ENCODE measurements at regions of chr5 and their contacts with region 1.

Region 1: GRCh38 chr5:112995764-112996618 is 19.4 kb downstream of the DCP2 start:
- DNase-seq: peak; percentile 55
- H3K4me3 ChIP-seq: no peak overlapping the region
- H3K27ac ChIP-seq: no peak overlapping the region
- H3K4me1 ChIP-seq: peaks cover 12% of the 10 kb centered on the region
- H3K27me3 ChIP-seq: no peaks in the 10 kb centered on the region
- CTCF ChIP-seq: peak; percentile 94

Region 2: GRCh38 chr5:112717506-112718082 is 278.4 kb before region 1 on chr5:
- intact Hi-C with region 1: no loop called
- DNase-seq: no peak
- H3K4me3 ChIP-seq: no peak overlapping the region
- H3K27ac ChIP-seq: no peak overlapping the region
- H3K4me1 ChIP-seq: peaks cover 40% of the 10 kb centered on the region
- H3K27me3 ChIP-seq: no peaks in the 10 kb centered on the region
- CTCF ChIP-seq: no peak

Region 3: DNA sequence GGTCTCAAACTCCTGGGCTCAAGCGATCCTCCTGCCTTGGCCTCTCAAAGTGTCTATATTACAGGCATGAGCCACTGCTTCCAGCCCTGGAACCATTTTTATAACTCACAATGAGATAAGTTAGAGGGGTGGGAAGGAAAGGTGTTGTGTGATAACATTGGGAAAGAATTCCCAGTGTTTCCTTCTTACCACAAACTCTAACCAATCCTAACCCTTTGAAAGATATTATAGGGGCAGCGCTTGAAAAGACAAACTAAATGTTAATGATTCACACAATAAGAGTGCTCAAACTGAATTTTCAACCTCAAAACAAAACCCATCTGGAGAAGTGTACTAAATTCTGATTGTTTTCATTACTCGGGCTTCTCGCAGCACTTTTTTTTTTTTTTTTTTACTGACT is 329.1 kb after region 1 on chr5:
- intact Hi-C with region 1: loop called (anchors 5 kb)
- DNase-seq: no peak
- H3K4me3 ChIP-seq: no peak overlapping the region
- H3K27ac ChIP-seq: no peak overlapping the region
- H3K4me1 ChIP-seq: peaks cover 8% of the 10 kb centered on the region
- H3K27me3 ChIP-seq: no peaks in the 10 kb centered on the region
- CTCF ChIP-seq: no peak

Region 4: GRCh38 chr5:113513384-113514288 is 517.6 kb after region 1 on chr5 and contains the start of gene YTHDC2:
- intact Hi-C with region 1: loop called (anchors 10 kb)
- DNase-seq: peak; percentile 89
- H3K4me3 ChIP-seq: peak within 1 kb of the TSS; percentile 79
- H3K27ac ChIP-seq: peak within 1 kb of the TSS; percentile 92
- H3K4me1 ChIP-seq: peaks cover 41% of the 10 kb centered on the region
- H3K27me3 ChIP-seq: no peaks in the 10 kb centered on the region
- CTCF ChIP-seq: peak; percentile 42
- total RNA-seq, gene YTHDC2: 13.6 TPM

Region 5: DNA sequence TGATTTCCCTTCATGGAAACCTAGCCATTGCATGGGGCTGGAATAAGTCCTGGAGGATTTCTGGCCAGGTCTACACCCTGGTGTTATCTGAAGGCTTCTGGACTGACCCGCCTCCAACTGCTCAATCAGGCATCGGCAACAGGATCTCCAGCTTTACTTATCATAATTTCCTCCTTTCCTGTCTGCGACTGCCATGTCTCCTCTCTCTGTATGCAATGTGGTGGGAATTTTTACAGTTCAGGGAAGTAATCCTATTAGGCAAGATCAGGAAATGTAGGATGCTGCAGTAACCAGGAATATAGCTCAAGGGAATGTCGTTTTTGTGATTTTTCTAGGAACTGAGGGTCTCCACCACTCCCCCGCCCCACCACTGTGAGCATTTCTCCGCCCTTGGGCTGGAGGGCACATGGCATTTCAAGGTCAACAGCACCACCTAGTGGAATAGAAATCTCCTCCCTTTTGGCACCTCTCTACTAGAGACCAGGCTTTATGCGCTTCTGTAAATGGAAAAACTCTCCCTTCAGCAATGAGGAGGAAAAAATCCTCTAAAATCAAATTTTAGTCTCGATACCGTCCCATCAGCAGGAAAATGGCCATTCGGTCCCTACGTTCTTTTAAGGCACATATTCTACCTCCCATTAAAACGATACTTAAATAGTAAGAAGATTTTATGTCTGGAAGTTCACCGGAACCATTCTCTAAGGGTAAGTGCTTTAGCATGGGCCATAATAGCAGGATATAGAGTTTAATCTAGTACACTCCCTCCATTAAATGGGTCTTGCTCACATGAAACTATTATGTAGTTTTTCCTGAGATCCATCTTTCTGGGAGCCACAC is 610.5 kb after region 1 on chr5:
- intact Hi-C with region 1: loop called (anchors 10 kb)
- DNase-seq: no peak
- H3K4me3 ChIP-seq: peak overlapping the region; percentile 24
- H3K27ac ChIP-seq: no peak overlapping the region
- H3K4me1 ChIP-seq: no peaks in the 10 kb centered on the region
- H3K27me3 ChIP-seq: no peaks in the 10 kb centered on the region
- CTCF ChIP-seq: peak; percentile 82